GM10248 (cell line): ENCODE measurements at regions of chr3 and their contacts with region 1.

Region 1: GRCh38 chr3:122314228-122314876 is 10.7 kb upstream of the CSTA start:
- DNase-seq: no peak
- CTCF ChIP-seq: no peak

Region 2: DNA sequence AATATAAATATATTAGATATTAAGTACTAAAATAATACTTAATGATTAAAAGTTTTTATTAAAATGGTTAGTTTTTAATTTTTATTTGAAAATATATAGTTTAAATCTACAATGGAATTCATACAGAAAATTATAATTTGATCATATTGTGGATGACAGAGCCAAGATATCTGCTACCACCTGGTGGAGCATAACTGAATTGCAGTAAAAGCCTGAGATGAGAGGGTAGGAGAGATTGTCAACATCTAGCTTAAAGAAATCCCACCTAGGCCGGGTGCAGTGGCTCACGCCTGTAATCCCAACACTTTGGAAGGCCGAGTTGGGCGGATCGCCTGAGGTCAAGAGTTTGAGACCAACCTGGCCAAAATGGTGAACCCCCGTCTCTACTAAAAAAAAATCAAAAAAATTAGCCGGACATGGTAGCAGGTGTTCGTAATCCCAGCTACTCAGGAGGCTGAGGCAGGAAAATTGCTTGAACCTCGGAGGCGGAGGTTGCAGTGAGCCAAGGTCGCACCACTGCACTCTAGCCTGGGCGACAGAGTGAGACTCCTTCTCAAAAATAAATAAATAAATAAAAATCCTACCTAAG is 14.4 kb before region 1 on chr3:
- CTCF ChIA-PET with region 1: interaction called, 15 read pairs
- POLR2A ChIA-PET with region 1: no interaction called
- DNase-seq: no peak
- CTCF ChIP-seq: peak; percentile 56